WTC11 (cell line): ENCODE measurements at regions of chr3 and their contacts with region 1.

Region 1: DNA sequence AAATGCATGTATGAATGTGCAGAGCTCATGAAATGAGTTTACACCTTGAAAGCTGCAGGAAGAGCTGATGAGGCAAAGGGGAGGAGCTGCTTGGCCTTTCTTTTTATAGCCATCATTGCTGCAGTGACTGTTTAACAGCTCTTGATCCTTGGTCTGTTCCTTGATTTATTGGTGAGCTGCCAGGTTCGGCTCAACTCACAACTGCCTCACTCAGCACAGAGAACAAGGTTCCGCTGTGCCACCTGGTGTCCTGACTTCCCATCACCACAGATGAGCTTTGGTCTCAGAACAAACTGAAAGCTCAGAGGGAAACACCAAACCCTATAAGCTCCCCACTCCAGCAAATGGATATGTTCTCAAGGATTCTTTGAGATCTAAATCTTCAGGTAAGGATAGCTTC is 626.1 kb downstream of the MAGI1 start:
- DNase-seq: peak; percentile 31
- ATAC-seq: peak; percentile 76
- H3K4me3 Mint-ChIP-seq: no peak overlapping the region
- H3K27ac Mint-ChIP-seq: no peak overlapping the region
- H3K4me1 Mint-ChIP-seq: peaks cover 24% of the 10 kb centered on the region
- H3K27me3 Mint-ChIP-seq: no peaks in the 10 kb centered on the region
- CTCF ChIP-seq: no peak

Region 2: GRCh38 chr3:65334045-65334665 is 78.4 kb before region 1 on chr3:
- CTCF ChIA-PET with region 1: interaction called, 26 read pairs
- POLR2A ChIA-PET with region 1: no interaction called
- DNase-seq: peak; percentile 50
- ATAC-seq: peak; percentile 72
- H3K4me3 Mint-ChIP-seq: no peak overlapping the region
- H3K27ac Mint-ChIP-seq: no peak overlapping the region
- H3K4me1 Mint-ChIP-seq: peaks cover 13% of the 10 kb centered on the region
- H3K27me3 Mint-ChIP-seq: no peaks in the 10 kb centered on the region; the same call in 1 of the 2 replicates
- CTCF ChIP-seq: 0 out of 2 replicates have a peak, but pooled peaks have one; percentile 23

Region 3: DNA sequence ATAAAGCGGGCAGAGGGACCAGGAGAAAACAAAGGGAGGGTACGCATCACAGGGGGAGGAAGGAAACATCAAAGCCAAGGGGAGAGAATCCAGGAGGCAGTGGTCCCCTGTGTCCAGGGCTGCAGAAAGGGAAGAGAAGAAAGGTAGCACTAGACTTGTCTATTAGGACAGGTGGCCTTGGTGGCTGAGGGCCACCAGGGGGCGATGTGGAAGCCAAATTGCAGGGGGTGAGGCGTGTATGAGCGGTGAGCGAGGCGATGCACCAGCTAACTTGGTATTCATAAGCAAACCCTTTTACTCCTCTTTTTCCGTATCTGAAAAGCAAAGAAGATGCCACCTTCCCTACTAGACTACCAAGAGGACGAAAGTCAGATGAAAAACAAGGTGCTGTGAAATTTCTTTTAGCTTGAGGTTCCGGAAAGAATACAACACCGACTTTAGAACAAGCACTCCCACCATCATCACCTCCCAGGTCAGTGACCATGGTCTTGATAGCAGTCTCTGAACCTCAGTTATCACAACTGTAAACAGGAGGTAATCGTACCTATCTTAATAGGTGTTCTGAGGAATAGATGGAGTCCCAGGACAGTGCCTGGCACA is 70.4 kb before region 1 on chr3:
- CTCF ChIA-PET with region 1: interaction called, 18 read pairs
- POLR2A ChIA-PET with region 1: no interaction called
- DNase-seq: peak; percentile 87
- ATAC-seq: peak; percentile 91
- H3K4me3 Mint-ChIP-seq: no peak overlapping the region
- H3K27ac Mint-ChIP-seq: no peak overlapping the region
- H3K4me1 Mint-ChIP-seq: peaks cover 46% of the 10 kb centered on the region
- H3K27me3 Mint-ChIP-seq: no peaks in the 10 kb centered on the region
- CTCF ChIP-seq: peak; percentile 85